ENCODE measurements at regions of chr19 and their contacts with region 1.

Region 1: GRCh38 chr19:51660975-51661600 is 14.5 kb upstream of the SIGLEC14 start:
- DNase-seq: peak; percentile 33
- H3K4me3 ChIP-seq: no peak overlapping the region
- H3K27ac ChIP-seq: no peak overlapping the region
- H3K27me3 ChIP-seq: no peaks in the 10 kb centered on the region
- CTCF ChIP-seq: peak; percentile 75

Region 2: DNA sequence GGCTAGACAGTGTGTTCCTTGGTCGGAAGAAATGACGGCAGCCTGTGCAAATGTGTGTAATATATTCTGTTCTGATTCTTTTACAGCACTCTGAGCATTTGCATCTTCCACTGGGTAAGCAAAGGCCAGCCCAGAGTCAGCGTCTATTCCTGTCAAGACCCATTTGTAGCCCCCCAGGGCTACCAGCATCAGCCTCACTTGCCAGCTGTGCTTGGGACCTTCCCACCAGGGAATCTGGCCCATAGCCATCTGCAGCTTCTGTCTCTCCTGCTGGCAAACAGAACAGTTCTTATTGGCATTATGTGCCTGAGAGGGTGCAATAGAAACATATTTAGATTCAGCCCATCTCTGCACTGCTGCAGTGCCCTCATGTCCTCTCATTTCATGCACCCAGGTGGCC is 355.6 kb before region 1 on chr19:
- CTCF ChIA-PET with region 1: no interaction called
- POLR2A ChIA-PET with region 1: no interaction called
- DNase-seq: no peak
- H3K4me3 ChIP-seq: no peak overlapping the region
- H3K27ac ChIP-seq: no peak overlapping the region
- H3K27me3 ChIP-seq: no peaks in the 10 kb centered on the region
- CTCF ChIP-seq: no peak

Region 3: GRCh38 chr19:51441410-51442390 is 219.4 kb before region 1 on chr19:
- CTCF ChIA-PET with region 1: no interaction called
- POLR2A ChIA-PET with region 1: no interaction called
- DNase-seq: no peak
- H3K4me3 ChIP-seq: no peak overlapping the region
- H3K27ac ChIP-seq: no peak overlapping the region
- H3K27me3 ChIP-seq: no peaks in the 10 kb centered on the region
- CTCF ChIP-seq: no peak

Region 4: GRCh38 chr19:51473009-51473707 is 187.9 kb before region 1 on chr19:
- CTCF ChIA-PET with region 1: interaction called, 128 read pairs
- POLR2A ChIA-PET with region 1: no interaction called
- DNase-seq: peak; percentile 30
- H3K4me3 ChIP-seq: no peak overlapping the region
- H3K27ac ChIP-seq: no peak overlapping the region
- H3K27me3 ChIP-seq: no peaks in the 10 kb centered on the region
- CTCF ChIP-seq: peak; percentile 77

Region 5: DNA sequence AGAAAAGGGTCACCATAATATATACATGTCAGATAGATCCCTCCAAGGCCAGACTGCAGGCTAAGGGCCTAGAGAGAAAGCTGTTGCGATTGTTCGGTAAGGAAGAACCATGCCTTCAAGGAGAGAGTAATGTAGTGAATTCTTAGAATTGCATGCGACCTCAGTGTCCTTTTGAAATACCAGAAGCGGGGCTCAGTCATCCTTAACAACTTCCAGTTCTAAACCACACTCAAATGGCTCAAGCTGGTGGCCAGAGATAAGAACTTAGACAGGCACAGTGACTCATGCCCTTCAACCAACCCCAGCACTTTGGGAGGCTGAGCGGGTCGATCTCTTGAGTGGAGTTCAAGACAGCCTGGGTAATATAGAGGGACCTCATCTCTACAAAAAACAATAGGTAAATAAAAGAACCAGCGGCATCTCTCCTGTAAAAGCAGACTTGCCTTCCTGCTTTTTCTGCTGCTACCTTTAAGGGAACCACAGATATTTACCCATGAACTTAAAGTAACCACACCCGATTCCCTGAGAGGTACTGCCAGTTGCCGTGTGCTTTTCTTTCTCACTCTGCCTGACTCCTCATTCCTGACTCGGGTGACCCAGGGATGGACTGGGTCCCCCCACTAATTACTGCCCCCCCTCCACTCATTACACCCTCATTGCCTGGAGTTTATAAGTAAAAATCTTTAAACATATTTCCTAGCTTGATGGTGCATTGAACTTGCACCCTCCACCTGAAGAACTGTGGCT is 114.3 kb before region 1 on chr19:
- CTCF ChIA-PET with region 1: no interaction called
- POLR2A ChIA-PET with region 1: no interaction called
- DNase-seq: no peak
- H3K4me3 ChIP-seq: no peak overlapping the region
- H3K27ac ChIP-seq: no peak overlapping the region
- H3K27me3 ChIP-seq: no peaks in the 10 kb centered on the region
- CTCF ChIP-seq: no peak

Region 6: DNA sequence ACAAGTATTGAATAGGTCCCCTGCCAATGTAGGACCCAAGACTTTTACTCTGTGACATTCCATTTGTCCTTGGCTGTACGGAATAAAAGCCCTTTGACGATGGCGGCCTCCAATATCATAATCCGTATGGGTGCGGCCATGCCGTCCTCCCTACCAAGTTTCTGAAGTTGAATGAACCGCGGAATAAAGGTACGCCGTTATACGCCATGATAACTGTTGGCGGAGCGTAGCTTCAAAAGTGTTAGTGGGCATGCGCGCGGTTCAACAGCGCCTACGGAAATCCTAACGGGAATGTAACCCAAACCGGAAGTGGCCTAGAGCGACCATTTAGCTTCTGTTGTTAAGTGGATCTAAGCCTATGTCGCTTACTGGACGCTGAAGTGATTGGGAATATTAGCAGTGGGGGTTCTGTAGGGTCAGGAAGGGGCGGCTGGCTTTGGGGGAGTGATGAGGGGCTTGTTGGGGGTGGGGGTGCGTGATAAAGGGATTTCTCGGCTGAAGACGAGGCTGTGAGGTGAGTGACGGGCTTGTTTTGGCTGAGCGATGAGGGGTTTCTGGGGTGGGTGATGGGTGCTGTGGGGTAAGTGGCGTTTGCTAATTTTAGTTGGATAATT is 90.0 kb before region 1 on chr19 and contains the start of gene ZNF175:
- CTCF ChIA-PET with region 1: interaction called, 15 read pairs
- POLR2A ChIA-PET with region 1: no interaction called
- DNase-seq: peak; percentile 90
- H3K4me3 ChIP-seq: peak within 1 kb of the TSS; percentile 84
- H3K27ac ChIP-seq: peak within 1 kb of the TSS; percentile 52
- H3K27me3 ChIP-seq: no peaks in the 10 kb centered on the region
- CTCF ChIP-seq: no peak
- polyA plus RNA-seq, gene ZNF175: 4.8 and 6.4 TPM in 2 replicates

Region 7: GRCh38 chr19:51637362-51637978 is 23.6 kb before region 1 on chr19:
- CTCF ChIA-PET with region 1: interaction called, 14 read pairs
- POLR2A ChIA-PET with region 1: no interaction called
- DNase-seq: no peak
- H3K4me3 ChIP-seq: no peak overlapping the region
- H3K27ac ChIP-seq: no peak overlapping the region
- H3K27me3 ChIP-seq: no peaks in the 10 kb centered on the region
- CTCF ChIP-seq: peak; percentile 40

Region 8: DNA sequence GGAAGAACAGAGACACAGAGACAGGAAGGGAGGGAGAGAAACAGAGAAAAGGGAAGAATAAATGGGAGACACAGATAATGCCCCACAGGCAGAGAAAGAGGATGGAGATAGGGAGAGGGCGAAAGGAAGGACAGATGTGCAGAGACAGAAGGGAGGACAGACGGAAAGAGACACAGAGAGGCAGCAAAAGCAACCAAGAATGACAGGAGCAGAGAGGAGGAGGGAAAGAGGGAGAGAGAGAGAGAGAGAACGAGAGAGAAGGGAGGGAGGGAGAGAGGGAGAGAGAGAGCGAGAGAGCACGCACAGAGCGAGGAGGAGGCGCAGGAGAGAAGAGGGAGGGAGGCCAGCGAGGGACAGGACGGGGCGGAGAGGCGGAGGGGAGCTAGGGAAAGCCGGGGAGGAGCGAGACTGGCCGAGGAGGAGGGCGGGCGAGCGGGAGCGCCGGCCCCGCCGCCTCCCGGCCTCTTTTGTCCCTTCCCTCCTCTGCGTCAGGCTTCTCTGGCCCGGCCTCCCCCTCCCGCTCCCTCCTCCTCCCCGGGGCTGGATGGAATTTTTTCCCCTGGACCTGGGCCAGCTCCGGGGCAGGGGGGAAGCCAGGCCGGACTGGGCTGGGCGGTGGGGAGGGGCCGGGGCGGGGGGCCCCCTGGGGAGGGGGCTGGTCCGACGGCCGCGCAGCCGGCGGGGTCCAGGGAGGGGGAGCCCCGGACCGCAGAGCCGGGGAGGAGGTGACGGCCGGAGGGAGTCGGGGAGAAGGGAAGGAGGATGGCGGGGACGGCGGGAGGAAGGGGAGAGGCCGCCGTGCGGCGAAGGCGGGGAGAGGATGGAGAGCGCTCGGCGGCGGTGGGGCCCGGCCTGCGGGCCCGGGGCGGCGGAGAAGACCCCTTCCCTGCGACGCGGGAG is 27.8 kb after region 1 on chr19:
- CTCF ChIA-PET with region 1: interaction called, 20 read pairs
- POLR2A ChIA-PET with region 1: no interaction called
- DNase-seq: peak; percentile 85
- H3K4me3 ChIP-seq: peak overlapping the region; percentile 96
- H3K27ac ChIP-seq: peak overlapping the region; percentile 77
- H3K27me3 ChIP-seq: no peaks in the 10 kb centered on the region
- CTCF ChIP-seq: no peak

Region 9: GRCh38 chr19:52200044-52200443 is 539.0 kb after region 1 on chr19:
- CTCF ChIA-PET with region 1: no interaction called
- POLR2A ChIA-PET with region 1: no interaction called
- DNase-seq: peak; percentile 21
- H3K4me3 ChIP-seq: no peak overlapping the region
- H3K27ac ChIP-seq: peak overlapping the region; percentile 77
- H3K27me3 ChIP-seq: no peaks in the 10 kb centered on the region
- CTCF ChIP-seq: no peak